Activated B cell treated with CpG ODN at 0.5 μM for 24 hours (primary cell): ENCODE measurements at regions of chrX and their contacts with region 1.

Region 1: DNA sequence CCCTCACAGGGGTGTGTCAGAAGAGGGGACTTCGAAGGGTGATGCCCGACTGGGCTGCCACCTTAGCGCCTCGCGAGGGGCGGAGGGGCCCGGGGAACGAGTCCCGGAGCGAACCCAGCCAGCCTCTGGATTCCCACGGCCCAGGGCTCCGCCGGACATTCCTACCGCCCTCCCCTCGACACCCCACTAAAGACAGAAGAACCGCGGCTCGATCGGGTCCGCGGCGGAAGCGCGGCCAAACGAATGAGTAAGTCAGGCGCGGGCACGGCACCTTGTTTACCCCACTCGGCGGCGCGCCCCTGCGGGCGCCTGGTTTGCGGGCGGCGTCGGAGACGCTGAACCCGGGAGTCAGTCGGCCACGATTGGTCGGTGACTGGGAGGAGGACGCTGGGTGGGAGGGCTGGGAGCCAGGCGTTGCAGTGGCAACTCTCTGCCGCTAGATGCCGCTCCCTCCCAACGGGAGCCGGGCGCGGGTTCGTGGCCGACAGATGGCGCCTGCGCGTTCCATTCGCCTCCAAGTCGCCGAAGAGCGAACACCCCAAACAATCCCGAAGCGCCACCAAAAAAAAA is 1.4 kb upstream of the STAG2 start:
- DNase-seq: peak; percentile 74
- ATAC-seq: peak; percentile 74
- H3K4me3 Mint-ChIP-seq: peak overlapping the region; percentile 93
- H3K27ac Mint-ChIP-seq: peak overlapping the region; percentile 99
- H3K4me1 Mint-ChIP-seq: peaks cover 23% of the 10 kb centered on the region
- H3K27me3 Mint-ChIP-seq: no peaks in the 10 kb centered on the region
- CTCF ChIP-seq: no peak

Region 2: DNA sequence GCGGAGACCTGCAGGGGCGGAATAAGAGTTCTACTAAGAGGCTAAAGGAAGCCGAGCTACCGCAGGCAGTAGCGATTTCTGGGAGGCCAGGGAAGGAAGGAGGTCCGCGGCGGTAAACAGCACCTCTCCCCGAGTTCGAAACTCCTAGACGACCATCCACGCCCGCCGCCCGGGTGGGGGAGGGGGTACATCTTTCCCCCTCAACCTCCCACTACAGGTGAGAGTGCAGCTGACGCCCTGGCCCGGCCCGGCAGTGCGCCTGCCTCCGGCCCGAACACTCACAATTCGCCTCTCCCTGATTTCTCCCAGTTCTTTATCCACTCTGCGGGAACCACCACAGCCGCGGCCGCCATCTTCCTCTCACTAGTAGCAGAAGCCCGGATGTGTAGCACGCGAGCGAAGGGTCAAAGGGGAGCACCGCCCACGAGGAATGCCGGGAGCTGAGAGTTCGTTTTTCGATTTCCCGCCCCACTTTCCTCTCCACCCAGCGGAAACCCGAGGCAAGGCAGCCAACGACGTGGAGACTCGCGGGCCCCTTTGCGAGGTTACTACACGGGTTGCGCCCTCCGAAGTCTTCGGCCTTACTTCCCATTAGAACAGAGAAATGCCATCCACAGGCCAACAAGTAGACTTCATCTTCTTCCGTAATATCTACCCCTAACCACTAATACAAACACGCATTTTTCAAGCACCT is 227.3 kb before region 1 on chrX and contains the start of gene THOC2:
- CTCF ChIA-PET with region 1: no interaction called
- POLR2A ChIA-PET with region 1: no interaction called
- intact Hi-C with region 1: loop called (anchors 2 kb)
- DNase-seq: peak; percentile 61
- ATAC-seq: peak; percentile 94
- H3K4me3 Mint-ChIP-seq: peak within 1 kb of the TSS; percentile 94
- H3K27ac Mint-ChIP-seq: peak within 1 kb of the TSS; percentile 87
- H3K4me1 Mint-ChIP-seq: peaks cover 33% of the 10 kb centered on the region
- H3K27me3 Mint-ChIP-seq: no peaks in the 10 kb centered on the region
- CTCF ChIP-seq: no peak
- total RNA-seq, gene THOC2: 97.8 and 106 TPM in 2 replicates

Region 3: GRCh38 chrX:123859846-123860838 is 100.0 kb before region 1 on chrX and contains the start of gene XIAP:
- CTCF ChIA-PET with region 1: no interaction called
- POLR2A ChIA-PET with region 1: interaction called, 7 read pairs
- intact Hi-C with region 1: loop called (anchors 1 kb)
- DNase-seq: peak; percentile 69
- ATAC-seq: peak; percentile 82
- H3K4me3 Mint-ChIP-seq: peak within 1 kb of the TSS; percentile 89
- H3K27ac Mint-ChIP-seq: peak within 1 kb of the TSS; percentile 88
- H3K4me1 Mint-ChIP-seq: peaks cover 19% of the 10 kb centered on the region
- H3K27me3 Mint-ChIP-seq: no peaks in the 10 kb centered on the region
- CTCF ChIP-seq: no peak
- total RNA-seq, gene XIAP: 32.0 and 43.6 TPM in 2 replicates

Region 4: GRCh38 chrX:123906557-123907316 is 53.4 kb before region 1 on chrX:
- CTCF ChIA-PET with region 1: no interaction called
- POLR2A ChIA-PET with region 1: no interaction called
- intact Hi-C with region 1: no loop called
- DNase-seq: no peak
- ATAC-seq: no peak
- H3K4me3 Mint-ChIP-seq: peak overlapping the region; percentile 19
- H3K27ac Mint-ChIP-seq: peak overlapping the region; percentile 43
- H3K4me1 Mint-ChIP-seq: peaks cover 37% of the 10 kb centered on the region
- H3K27me3 Mint-ChIP-seq: no peaks in the 10 kb centered on the region
- CTCF ChIP-seq: no peak

Region 5: GRCh38 chrX:123983240-123983639 is 23.1 kb after region 1 on chrX:
- CTCF ChIA-PET with region 1: no interaction called
- POLR2A ChIA-PET with region 1: interaction called, 5 read pairs
- intact Hi-C with region 1: loop called (anchors 2 kb)
- DNase-seq: no peak
- ATAC-seq: no peak
- H3K4me3 Mint-ChIP-seq: peak overlapping the region; percentile 56
- H3K27ac Mint-ChIP-seq: no peak overlapping the region
- H3K4me1 Mint-ChIP-seq: peaks cover 60% of the 10 kb centered on the region
- H3K27me3 Mint-ChIP-seq: no peaks in the 10 kb centered on the region
- CTCF ChIP-seq: no peak

Region 6: GRCh38 chrX:124098089-124098488 is 138.0 kb after region 1 on chrX:
- CTCF ChIA-PET with region 1: no interaction called
- POLR2A ChIA-PET with region 1: no interaction called
- intact Hi-C with region 1: loop called (anchors 1 kb)
- DNase-seq: no peak
- ATAC-seq: peak; percentile 56
- H3K4me3 Mint-ChIP-seq: no peak overlapping the region
- H3K27ac Mint-ChIP-seq: no peak overlapping the region
- H3K4me1 Mint-ChIP-seq: no peaks in the 10 kb centered on the region
- H3K27me3 Mint-ChIP-seq: no peaks in the 10 kb centered on the region
- CTCF ChIP-seq: no peak

Region 7: DNA sequence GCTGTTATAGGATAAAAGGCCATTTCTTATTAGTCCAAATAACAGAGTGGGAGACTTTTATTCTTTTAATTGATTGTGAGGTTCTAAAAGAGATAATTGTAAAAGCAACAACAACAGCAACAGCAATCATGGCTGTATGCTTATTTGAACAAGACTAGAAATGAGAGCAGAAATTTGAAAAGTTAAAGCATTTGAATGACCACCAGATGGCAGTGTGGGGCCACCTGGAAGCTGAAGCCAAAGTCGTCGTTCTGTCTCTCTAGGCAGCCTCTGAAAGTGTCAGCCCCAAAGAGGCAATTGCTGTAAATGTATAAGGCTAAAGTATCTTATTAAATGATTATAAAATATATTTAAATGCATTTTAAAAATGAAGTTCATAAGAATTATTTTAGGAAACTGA is 428.4 kb after region 1 on chrX:
- CTCF ChIA-PET with region 1: no interaction called
- POLR2A ChIA-PET with region 1: no interaction called
- intact Hi-C with region 1: loop called (anchors 5 kb)
- DNase-seq: no peak
- ATAC-seq: no peak
- H3K4me3 Mint-ChIP-seq: no peak overlapping the region
- H3K27ac Mint-ChIP-seq: no peak overlapping the region
- H3K4me1 Mint-ChIP-seq: no peaks in the 10 kb centered on the region
- H3K27me3 Mint-ChIP-seq: no peaks in the 10 kb centered on the region
- CTCF ChIP-seq: peak; percentile 42

Region 8: DNA sequence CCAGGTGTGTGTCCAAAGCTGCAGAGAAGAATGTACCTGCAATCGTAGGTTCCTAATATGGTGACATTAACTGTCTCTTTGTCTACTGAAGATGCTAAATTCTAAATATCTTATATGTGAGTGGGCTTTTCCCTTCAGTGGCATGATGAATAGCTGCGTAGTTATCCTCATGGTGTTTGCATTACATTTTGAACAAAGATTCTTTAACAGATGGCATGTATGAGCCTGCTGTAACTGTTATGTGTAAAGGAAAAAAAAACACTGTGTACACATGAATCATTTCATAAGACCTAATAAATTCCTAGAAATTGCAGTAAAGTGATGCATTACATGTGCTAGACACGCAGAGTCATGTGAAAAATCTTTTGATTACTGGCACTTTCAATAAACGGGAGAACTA is 674.2 kb after region 1 on chrX:
- CTCF ChIA-PET with region 1: no interaction called
- POLR2A ChIA-PET with region 1: no interaction called
- intact Hi-C with region 1: no loop called
- DNase-seq: no peak
- ATAC-seq: no peak
- H3K4me3 Mint-ChIP-seq: no peak overlapping the region
- H3K27ac Mint-ChIP-seq: no peak overlapping the region
- H3K4me1 Mint-ChIP-seq: no peaks in the 10 kb centered on the region
- H3K27me3 Mint-ChIP-seq: no peaks in the 10 kb centered on the region
- CTCF ChIP-seq: no peak